Dendritic cell treated with granulocyte-macrophage colony-stimulating factor and Interleukin-4, amounts not matched to agents 40 ng/mL and 50 ng/mL, for 4 days (primary cell): ENCODE measurements at regions of chr4 and their contacts with region 1.

Region 1: DNA sequence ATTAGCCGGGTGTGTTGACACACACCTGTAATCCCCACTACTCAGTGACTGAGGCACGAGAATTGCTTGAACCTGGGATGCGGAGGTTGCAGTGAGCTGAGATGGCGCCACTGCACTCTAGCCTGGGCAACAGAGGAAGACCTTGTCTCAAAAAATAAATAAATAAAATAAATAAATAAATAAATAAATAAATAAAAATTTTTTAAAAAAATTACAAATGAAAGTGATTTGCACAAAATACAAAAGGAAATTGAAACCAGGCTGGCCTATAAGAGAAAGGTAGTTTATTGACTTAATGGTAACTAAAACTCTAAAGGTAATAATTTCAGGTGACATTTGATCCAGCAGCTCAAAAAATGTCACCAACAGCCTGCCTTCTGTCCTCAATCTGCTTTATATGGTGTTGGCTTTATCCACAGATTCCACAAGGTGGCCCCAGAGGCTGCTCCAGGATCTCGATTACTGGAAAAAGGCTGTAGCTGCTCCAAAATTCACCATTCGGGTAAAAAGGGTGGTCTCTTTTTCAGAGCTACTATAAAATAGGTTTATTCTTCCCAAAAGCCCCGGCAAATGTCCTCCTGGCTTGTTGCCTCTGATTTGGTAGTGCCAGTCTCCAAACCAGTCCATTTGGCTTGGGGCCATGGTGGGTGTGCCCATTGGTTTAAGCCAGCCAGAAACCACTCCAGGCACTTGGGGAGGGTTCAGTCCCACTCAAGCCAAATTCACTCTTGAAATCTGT is 61.4 kb upstream of the TRIM2 start:
- H3K4me3 Mint-ChIP-seq: no peak overlapping the region
- H3K27ac Mint-ChIP-seq: no peak overlapping the region
- H3K4me1 Mint-ChIP-seq: peaks cover 10% of the 10 kb centered on the region
- H3K27me3 Mint-ChIP-seq: peaks cover 6% of the 10 kb centered on the region

Region 2: GRCh38 chr4:152983774-152984411 is 159.0 kb before region 1 on chr4:
- intact Hi-C with region 1: no loop called
- H3K4me3 Mint-ChIP-seq: no peak overlapping the region
- H3K27ac Mint-ChIP-seq: no peak overlapping the region
- H3K4me1 Mint-ChIP-seq: no peaks in the 10 kb centered on the region
- H3K27me3 Mint-ChIP-seq: no peaks in the 10 kb centered on the region

Region 3: GRCh38 chr4:153318696-153319320 is 175.9 kb after region 1 on chr4:
- intact Hi-C with region 1: loop called (anchors 2 kb)
- H3K4me3 Mint-ChIP-seq: no peak overlapping the region
- H3K27ac Mint-ChIP-seq: no peak overlapping the region
- H3K4me1 Mint-ChIP-seq: no peaks in the 10 kb centered on the region
- H3K27me3 Mint-ChIP-seq: peaks cover 2% of the 10 kb centered on the region

Region 4: DNA sequence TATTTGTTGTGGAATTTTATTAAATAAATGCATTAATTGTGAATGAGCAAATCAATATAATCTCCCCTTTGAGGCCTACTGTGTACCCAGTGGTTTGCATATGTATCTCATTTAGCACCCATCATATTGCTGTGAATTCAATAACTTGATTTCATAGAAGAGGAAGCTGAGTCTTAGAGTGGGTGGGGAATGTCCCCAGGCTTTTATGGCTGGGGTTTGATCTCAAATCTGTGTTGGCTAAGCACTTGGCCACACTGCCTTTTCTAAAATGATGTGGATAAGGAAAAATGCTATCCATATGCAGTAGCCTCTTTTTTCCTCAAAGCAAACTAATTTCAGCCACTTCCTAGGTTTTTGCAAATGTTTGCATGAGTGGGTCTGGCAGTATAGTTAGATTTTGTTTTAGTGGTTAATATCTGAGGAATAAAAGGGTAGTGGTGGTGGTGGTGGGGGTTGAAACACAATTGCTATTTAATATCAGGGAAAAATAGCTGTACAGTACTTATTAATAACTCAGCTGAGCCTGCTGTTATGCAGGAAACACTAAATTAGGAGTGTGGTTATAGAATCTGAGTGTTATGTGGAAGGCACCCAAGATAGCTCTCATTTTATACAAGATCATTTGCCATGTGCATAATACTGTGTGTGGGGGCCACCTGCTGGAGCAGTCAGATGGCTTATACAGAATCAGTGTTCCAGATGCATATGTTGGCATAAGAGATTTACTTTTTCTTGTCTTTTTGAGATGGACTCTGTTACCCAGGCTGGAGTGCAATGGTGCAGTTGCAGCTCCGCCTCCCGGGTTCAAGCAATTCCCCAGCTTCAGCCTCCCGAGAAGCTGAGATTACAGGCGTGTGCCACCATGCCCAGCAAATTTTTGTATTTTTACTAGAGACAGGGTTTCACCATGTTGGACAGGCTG is 431.3 kb after region 1 on chr4:
- intact Hi-C with region 1: loop called (anchors 2 kb)
- H3K4me3 Mint-ChIP-seq: no peak overlapping the region
- H3K27ac Mint-ChIP-seq: no peak overlapping the region
- H3K4me1 Mint-ChIP-seq: peaks cover 9% of the 10 kb centered on the region
- H3K27me3 Mint-ChIP-seq: peaks cover 8% of the 10 kb centered on the region

Region 5: DNA sequence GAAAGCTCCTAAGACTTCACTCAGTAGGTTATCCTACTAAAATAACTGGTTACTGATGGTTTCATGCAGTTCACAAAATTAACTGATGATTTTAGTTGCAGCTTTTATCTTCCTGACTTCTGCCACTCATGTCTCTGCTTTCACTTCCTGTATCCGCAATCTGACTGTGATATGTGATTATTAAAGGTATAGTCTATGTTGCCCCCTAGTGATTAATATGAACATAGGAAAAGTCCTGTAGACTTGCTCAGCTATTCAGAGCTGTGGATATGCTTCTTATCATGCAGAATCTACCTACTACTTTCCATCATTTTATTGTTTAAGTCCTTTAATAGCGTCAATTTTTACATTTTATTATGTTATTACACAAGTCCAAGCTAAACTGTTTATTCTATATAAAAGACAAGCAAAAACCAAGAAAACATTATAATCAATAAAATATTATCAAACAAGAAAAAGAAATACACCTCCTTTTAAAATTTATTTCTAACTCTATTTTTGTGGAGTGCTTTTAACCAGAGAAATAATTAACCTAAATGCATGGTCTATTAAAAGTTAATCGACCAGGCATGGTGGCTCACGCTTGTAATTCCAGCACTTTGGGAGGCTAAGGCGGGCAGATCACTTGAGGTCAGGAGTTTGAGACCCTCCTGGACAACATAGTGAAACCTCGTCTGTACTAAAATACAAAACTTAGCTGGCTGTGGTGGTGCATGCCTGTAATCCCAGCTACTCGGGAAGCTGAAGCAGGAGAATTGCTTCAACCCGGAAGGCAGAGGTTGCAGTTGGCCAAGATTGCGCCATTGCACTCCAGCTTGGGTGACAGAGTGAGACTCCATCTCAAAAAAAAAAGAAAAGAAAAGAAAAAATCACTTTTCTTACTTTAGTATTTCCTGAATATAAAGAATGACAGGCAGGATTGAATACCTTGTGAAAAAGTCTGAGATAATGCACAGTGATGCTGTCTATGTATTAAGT is 500.8 kb after region 1 on chr4:
- intact Hi-C with region 1: loop called (anchors 10 kb)
- H3K4me3 Mint-ChIP-seq: no peak overlapping the region
- H3K27ac Mint-ChIP-seq: no peak overlapping the region
- H3K4me1 Mint-ChIP-seq: peaks cover 34% of the 10 kb centered on the region
- H3K27me3 Mint-ChIP-seq: no peaks in the 10 kb centered on the region

Region 6: DNA sequence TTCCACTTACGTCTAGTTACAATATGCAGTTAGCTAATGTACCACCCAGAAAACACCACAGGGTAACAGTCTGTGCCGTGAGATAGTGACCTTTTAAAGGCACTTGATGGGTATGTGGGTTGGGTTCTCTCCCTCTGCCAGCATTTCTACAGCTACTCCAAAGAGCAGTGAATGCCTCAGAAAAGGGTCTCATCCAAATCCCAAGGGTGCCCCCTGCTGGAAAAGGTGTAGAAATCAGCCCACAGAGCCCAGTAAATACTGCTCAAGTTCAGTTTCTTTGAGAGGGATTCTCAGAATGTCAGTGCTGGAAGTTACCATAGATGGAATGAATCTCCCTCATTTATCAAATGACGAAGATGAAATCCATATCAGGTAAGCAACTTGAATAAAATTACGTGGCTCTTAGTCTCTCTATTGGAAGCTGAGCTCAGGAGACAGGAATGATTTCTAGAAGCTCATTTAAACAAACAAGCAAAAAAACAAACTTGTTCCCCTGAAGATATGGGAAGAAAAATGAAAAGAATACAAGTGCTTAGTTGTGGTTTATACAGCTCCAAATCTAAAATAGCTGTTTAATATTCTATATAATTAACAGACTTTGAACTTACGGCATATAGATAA is 607.4 kb after region 1 on chr4:
- intact Hi-C with region 1: loop called (anchors 10 kb)
- H3K4me3 Mint-ChIP-seq: no peak overlapping the region
- H3K27ac Mint-ChIP-seq: no peak overlapping the region
- H3K4me1 Mint-ChIP-seq: peaks cover 35% of the 10 kb centered on the region
- H3K27me3 Mint-ChIP-seq: no peaks in the 10 kb centered on the region